ENCODE measurements at regions of chr19 and their contacts with region 1.

Region 1: GRCh38 chr19:3163230-3163886 is 15.2 kb upstream of the S1PR4 start:
- DNase-seq: peak; percentile 78
- ATAC-seq: peak; percentile 91
- H3K4me3 Mint-ChIP-seq: no peak overlapping the region
- H3K27ac Mint-ChIP-seq: peak overlapping the region; percentile 67
- H3K4me1 Mint-ChIP-seq: peaks cover 52% of the 10 kb centered on the region
- H3K27me3 Mint-ChIP-seq: no peaks in the 10 kb centered on the region

Region 2: DNA sequence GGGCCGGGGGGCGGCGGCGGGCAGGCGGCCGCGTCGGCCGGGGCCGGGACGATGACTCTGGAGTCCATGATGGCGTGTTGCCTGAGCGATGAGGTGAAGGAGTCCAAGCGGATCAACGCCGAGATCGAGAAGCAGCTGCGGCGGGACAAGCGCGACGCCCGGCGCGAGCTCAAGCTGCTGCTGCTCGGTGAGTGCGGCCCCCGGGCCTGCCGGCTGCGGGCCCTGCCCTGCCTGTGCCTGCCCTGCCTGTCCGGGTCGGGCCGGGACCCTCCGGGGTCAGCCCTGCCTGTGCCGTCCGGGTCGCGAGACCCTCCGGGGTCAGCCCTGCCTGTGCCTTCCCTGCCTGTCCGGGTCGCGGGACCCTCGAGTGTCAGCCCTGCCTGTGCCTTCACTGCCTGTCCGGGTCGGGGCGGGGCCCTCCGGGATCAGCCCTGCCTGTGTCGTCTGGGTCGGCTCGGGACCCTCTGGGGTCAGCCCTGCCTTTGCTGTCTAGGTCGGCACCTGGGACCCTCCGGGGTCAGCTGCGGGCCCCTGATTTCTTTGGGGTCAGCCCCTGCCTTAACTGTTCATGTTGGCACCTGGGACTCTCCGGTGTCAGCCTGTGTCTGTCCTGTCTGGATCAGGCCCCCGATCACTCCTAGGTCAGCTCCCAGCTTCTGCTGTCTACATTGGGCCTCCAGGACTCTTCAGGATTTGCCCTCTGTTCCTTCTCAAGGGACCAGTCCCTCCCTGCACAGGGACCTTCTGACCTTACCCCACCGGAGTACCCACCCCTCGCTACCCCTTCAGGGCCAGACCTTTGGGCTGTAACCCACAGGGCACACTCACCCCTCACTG is 68.5 kb before region 1 on chr19:
- CTCF ChIA-PET with region 1: no interaction called
- POLR2A ChIA-PET with region 1: no interaction called
- DNase-seq: peak; percentile 38
- ATAC-seq: peak; percentile 28
- H3K4me3 Mint-ChIP-seq: peak overlapping the region; percentile 46
- H3K27ac Mint-ChIP-seq: no peak overlapping the region
- H3K4me1 Mint-ChIP-seq: peaks cover 18% of the 10 kb centered on the region
- H3K27me3 Mint-ChIP-seq: peaks cover 33% of the 10 kb centered on the region

Region 3: GRCh38 chr19:3125900-3126524 is 37.3 kb before region 1 on chr19:
- CTCF ChIA-PET with region 1: interaction called, 27 read pairs
- POLR2A ChIA-PET with region 1: no interaction called
- DNase-seq: peak; percentile 64
- ATAC-seq: peak; percentile 95
- H3K4me3 Mint-ChIP-seq: no peak overlapping the region
- H3K27ac Mint-ChIP-seq: no peak overlapping the region
- H3K4me1 Mint-ChIP-seq: peaks cover 12% of the 10 kb centered on the region
- H3K27me3 Mint-ChIP-seq: peaks cover 3% of the 10 kb centered on the region

Measured in activated CD8-positive, alpha-beta T cell treated with anti-CD3 and anti-CD28 coated beads, Interleukin-2, amount 10 ng/mL, durations not matched to agents 7 days and 5 days (primary cell).